K562 (cell line): ENCODE measurements at regions of chr5 and their contacts with region 1.

Region 1: GRCh38 chr5:143403593-143404415 is at the start of gene NR3C1:
- DNase-seq: peak; percentile 79 to 89 (median 82)
- ATAC-seq: peak; percentile 76
- H3K4me3 ChIP-seq: peak within 1 kb of the TSS; percentile 76
- H3K27ac ChIP-seq: peak within 1 kb of the TSS; percentile 97
- H3K4me1 ChIP-seq: peaks cover 18 to 19% of the 10 kb centered on the region in 2 experiments; a peak in 4 of 5 replicates
- H3K27me3 ChIP-seq: no peaks in the 10 kb centered on the region
- CTCF ChIP-seq: peak; percentile 32 to 82 (median 66)
- EP300 ChIP-seq: no peak
- POLR2A ChIP-seq: peak; percentile 40; the same call in 1 of the 2 replicates
- RAD21 ChIP-seq: peak; percentile 48 to 54
- polyA plus RNA-seq, gene NR3C1: 8.2 to 10.1 TPM

Region 2: DNA sequence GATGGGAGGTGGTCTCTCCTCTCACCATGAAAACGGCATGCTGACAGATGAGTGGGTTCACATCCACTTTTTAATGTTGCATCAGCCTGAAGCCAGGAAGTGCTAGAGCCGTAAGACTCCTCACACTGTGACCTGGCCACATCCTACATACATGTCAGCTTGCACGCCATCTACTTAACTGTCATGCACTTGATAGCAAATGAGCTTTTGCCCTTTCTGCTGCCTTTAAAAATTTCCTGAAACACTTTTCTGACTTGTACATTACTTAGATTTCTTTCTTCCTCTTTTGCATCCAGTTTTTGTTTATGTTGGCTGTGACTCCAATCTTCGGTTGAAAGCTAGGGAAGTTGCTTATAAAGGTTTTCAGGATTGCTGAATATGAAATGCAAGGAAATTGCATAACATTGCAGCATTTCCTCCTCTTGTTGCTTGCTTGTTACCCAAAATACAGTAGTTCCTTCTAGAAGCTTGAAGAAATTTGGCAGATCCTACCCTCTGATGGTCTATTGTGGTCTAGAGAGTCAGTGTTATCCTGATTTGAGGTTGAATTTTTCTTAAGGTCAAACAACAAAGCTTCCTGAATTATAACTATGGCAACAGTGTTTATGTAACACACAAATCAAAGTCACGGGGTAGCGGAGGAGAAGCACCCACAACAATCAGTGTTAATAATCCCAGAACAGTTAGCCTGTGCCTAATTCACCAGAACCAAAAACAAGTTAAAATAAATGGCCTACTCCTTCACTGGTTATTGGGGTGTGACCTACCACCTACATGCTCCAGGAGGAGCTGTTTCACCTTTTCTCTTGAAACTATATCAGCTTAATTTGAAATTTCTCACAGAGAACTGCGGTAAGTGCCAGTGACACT is 401.1 kb before region 1 on chr5:
- CTCF ChIA-PET with region 1: interaction called, 8 read pairs
- POLR2A ChIA-PET with region 1: no interaction called
- in situ Hi-C with region 1: no loop called
- intact Hi-C with region 1: loop called (anchors 1 kb)
- DNase-seq: peak; percentile 23 to 45 (median 36)
- ATAC-seq: peak; percentile 88
- H3K4me3 ChIP-seq: no peak overlapping the region
- H3K27ac ChIP-seq: no peak overlapping the region
- H3K4me1 ChIP-seq: no peaks in the 10 kb centered on the region
- H3K27me3 ChIP-seq: peaks cover 2 to 4% of the 10 kb centered on the region in 2 experiments; a peak in 1 of 5 replicates
- CTCF ChIP-seq: peak; percentile 49 to 74 (median 68); a peak in 4 of 6 replicates
- EP300 ChIP-seq: no peak; the same call in 1 of the 2 replicates
- POLR2A ChIP-seq: no peak
- RAD21 ChIP-seq: peak; percentile 75 to 83

Region 3: GRCh38 chr5:143016777-143017516 is 386.9 kb before region 1 on chr5:
- CTCF ChIA-PET with region 1: interaction called, 8 read pairs
- POLR2A ChIA-PET with region 1: no interaction called
- in situ Hi-C with region 1: no loop called
- intact Hi-C with region 1: loop called (anchors 2 kb)
- DNase-seq: peak; percentile 17 to 55 (median 38)
- ATAC-seq: peak; percentile 79
- H3K4me3 ChIP-seq: no peak overlapping the region
- H3K27ac ChIP-seq: no peak overlapping the region
- H3K4me1 ChIP-seq: peaks cover 0 to 6% of the 10 kb centered on the region in 2 experiments; a peak in 2 of 5 replicates
- H3K27me3 ChIP-seq: no peaks in the 10 kb centered on the region
- CTCF ChIP-seq: peak; percentile 44 to 71 (median 69); a peak in 5 of 6 replicates
- EP300 ChIP-seq: no peak
- POLR2A ChIP-seq: no peak
- RAD21 ChIP-seq: peak; percentile 78 to 86

Region 4: DNA sequence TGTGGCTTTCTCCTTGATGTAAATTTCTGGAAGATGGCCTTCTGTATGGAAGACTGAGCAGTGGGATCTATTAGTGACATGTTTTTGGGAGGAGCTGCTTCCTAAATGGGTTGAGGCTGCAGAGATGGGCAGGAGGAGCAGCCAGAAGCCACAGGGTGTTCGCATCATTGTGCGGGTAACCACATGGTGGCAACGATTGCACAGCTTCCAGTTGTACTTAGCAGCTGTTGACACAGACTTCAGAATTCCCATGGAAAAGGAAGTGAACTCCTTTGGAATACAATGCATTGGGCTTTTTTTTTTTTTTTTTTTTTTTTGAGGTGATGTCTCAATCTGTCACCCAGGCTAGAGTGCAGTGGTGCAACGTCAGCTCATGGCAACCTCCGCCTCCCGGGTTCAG is 297.6 kb before region 1 on chr5:
- CTCF ChIA-PET with region 1: no interaction called
- POLR2A ChIA-PET with region 1: interaction called, 3 read pairs
- in situ Hi-C with region 1: no loop called
- intact Hi-C with region 1: loop called (anchors 5 kb)
- DNase-seq: peak in 1 of 4 experiments; percentile 18
- ATAC-seq: peak; percentile 50; the same call in 1 of the 3 replicates
- H3K4me3 ChIP-seq: no peak overlapping the region
- H3K27ac ChIP-seq: no peak overlapping the region
- H3K4me1 ChIP-seq: peaks cover 0 to 8% of the 10 kb centered on the region in 2 experiments; a peak in 2 of 5 replicates
- H3K27me3 ChIP-seq: no peaks in the 10 kb centered on the region
- CTCF ChIP-seq: peak in 2 of 3 experiments; percentile 12 to 22; a peak in 1 of 6 replicates
- EP300 ChIP-seq: no peak
- POLR2A ChIP-seq: no peak
- RAD21 ChIP-seq: peak in 1 of 2 experiments; percentile 40; a peak in 2 of 4 replicates

Region 5: GRCh38 chr5:143213851-143214363 is 189.9 kb before region 1 on chr5:
- CTCF ChIA-PET with region 1: no interaction called
- POLR2A ChIA-PET with region 1: no interaction called
- in situ Hi-C with region 1: no loop called
- intact Hi-C with region 1: loop called (anchors 2 kb)
- DNase-seq: peak; percentile 45 to 76 (median 58)
- ATAC-seq: peak; percentile 59
- H3K4me3 ChIP-seq: no peak overlapping the region
- H3K27ac ChIP-seq: peak overlapping the region; percentile 79
- H3K4me1 ChIP-seq: peaks cover 33 to 58% of the 10 kb centered on the region in 2 experiments
- H3K27me3 ChIP-seq: no peaks in the 10 kb centered on the region
- CTCF ChIP-seq: no peak; a peak in 1 of 6 replicates
- EP300 ChIP-seq: peak; percentile 33; the same call in 1 of the 2 replicates
- POLR2A ChIP-seq: 0 out of 2 replicates have a peak, but pooled peaks have one; percentile 28
- RAD21 ChIP-seq: peak in 1 of 2 experiments; percentile 8; a peak in 1 of 4 replicates

Region 6: GRCh38 chr5:143341807-143342570 is 61.8 kb before region 1 on chr5:
- CTCF ChIA-PET with region 1: no interaction called
- POLR2A ChIA-PET with region 1: no interaction called
- in situ Hi-C with region 1: no loop called
- intact Hi-C with region 1: loop called (anchors 5 kb)
- DNase-seq: peak in 1 of 4 experiments; percentile 34
- ATAC-seq: peak; percentile 81
- H3K4me3 ChIP-seq: no peak overlapping the region
- H3K27ac ChIP-seq: 0 out of 3 replicates have a peak overlapping the region, but pooled peaks have one; percentile 0
- H3K4me1 ChIP-seq: peaks cover 0 to 23% of the 10 kb centered on the region in 2 experiments; a peak in 2 of 5 replicates
- H3K27me3 ChIP-seq: no peaks in the 10 kb centered on the region
- CTCF ChIP-seq: no peak
- EP300 ChIP-seq: peak; percentile 77
- POLR2A ChIP-seq: no peak
- RAD21 ChIP-seq: peak in 1 of 2 experiments; percentile 14; a peak in 1 of 4 replicates